Activated T-helper 2 cell treated with anti-CD3 and anti-CD28 coated beads, Interferon-gamma antibody, Interleukin-2, Interleukin-4, amounts not matched to agents 10 μg/mL and 5 μg/mL and 100 μg/mL, durations not matched to agents 14 hours and 24 hours and 36 hours (primary cell): ENCODE measurements at regions of chr5 and their contacts with region 1.

Region 1: DNA sequence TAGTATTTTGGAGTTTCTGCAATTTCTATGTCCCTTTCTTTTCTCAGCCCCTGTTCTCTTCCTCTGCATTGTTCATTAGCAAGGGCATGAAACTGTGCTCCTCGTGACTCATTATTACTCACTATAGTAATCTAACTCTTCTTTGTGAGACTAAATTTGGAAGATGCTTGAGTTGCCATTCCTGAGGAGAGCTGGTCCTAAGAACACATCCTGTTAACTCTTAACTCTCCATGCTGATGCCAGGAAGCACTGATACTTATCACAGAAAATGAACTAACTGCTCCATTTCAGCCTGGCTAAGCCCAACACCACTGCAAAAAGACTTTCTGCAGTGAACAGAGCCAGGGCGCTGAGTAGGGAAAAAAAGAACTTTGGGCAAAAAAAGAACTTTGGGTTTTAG is 10.6 kb upstream of the CSNK1A1 start:
- DNase-seq: no peak
- H3K4me3 Mint-ChIP-seq: no peak overlapping the region
- H3K27ac Mint-ChIP-seq: no peak overlapping the region
- H3K4me1 Mint-ChIP-seq: peaks cover 19% of the 10 kb centered on the region
- H3K27me3 Mint-ChIP-seq: no peaks in the 10 kb centered on the region

Region 2: GRCh38 chr5:149367249-149367971 is 194.4 kb before region 1 on chr5:
- intact Hi-C with region 1: loop called (anchors 5 kb)
- DNase-seq: peak; percentile 32
- H3K4me3 Mint-ChIP-seq: no peak overlapping the region
- H3K27ac Mint-ChIP-seq: no peak overlapping the region
- H3K4me1 Mint-ChIP-seq: peaks cover 7% of the 10 kb centered on the region
- H3K27me3 Mint-ChIP-seq: no peaks in the 10 kb centered on the region

Region 3: GRCh38 chr5:149442563-149443182 is 119.2 kb before region 1 on chr5:
- intact Hi-C with region 1: loop called (anchors 1 kb)
- DNase-seq: peak; percentile 52
- H3K4me3 Mint-ChIP-seq: no peak overlapping the region
- H3K27ac Mint-ChIP-seq: no peak overlapping the region
- H3K4me1 Mint-ChIP-seq: peaks cover 24% of the 10 kb centered on the region
- H3K27me3 Mint-ChIP-seq: no peaks in the 10 kb centered on the region

Region 4: GRCh38 chr5:149576021-149576420 is 14.2 kb after region 1 on chr5:
- intact Hi-C with region 1: loop called (anchors 2 kb)
- DNase-seq: no peak
- H3K4me3 Mint-ChIP-seq: no peak overlapping the region
- H3K27ac Mint-ChIP-seq: peak overlapping the region; percentile 91
- H3K4me1 Mint-ChIP-seq: peaks cover 20% of the 10 kb centered on the region
- H3K27me3 Mint-ChIP-seq: no peaks in the 10 kb centered on the region

Region 5: GRCh38 chr5:149697001-149697400 is 135.2 kb after region 1 on chr5:
- intact Hi-C with region 1: no loop called
- DNase-seq: no peak
- H3K4me3 Mint-ChIP-seq: no peak overlapping the region
- H3K27ac Mint-ChIP-seq: no peak overlapping the region
- H3K4me1 Mint-ChIP-seq: no peaks in the 10 kb centered on the region
- H3K27me3 Mint-ChIP-seq: peaks cover 13% of the 10 kb centered on the region